ENCODE measurements at regions of chr2 and their contacts with region 1.

Region 1: DNA sequence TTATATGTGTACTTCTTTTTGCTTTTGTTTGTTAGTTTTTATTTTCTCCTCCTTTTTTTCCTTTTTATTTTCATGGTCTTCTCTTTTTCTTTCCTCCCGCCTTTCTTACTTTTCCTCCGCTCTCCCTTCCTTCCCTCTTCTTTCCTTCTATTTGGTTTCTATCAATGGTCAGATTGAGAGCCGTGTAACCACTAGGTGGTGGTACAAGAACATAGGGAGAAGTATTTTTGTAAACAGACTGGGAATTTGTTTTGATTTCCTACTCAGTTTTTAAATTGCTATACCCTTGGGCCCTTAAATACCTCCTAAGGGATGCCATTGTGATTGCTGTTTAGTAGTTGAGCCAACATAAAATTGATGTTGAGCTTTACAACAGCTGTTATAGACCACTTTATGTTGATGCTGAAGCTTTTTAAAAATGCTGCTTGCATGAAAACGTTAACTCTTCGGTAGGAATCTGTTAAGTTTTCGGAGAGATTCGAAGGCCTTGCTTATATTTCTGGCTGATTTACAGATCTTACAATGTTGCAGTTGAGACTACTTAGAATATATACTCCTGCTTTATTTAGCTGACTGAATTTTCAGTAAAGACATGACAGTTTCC is 124.2 kb downstream of the UBE2E3 start:
- DNase-seq: peak in 7 of 9 donors; percentile 14 to 66 (median 54)
- ATAC-seq: peak; percentile 64
- H3K4me3 ChIP-seq: no peak overlapping the region
- H3K4me3 Mint-ChIP-seq: peak overlapping the region in 7 of 10 donors; percentile 0 to 27 (median 11)
- H3K27ac ChIP-seq: no peak overlapping the region
- H3K27ac Mint-ChIP-seq: peak overlapping the region in 7 of 9 donors; percentile 4 to 35 (median 27)
- H3K4me1 ChIP-seq: peaks cover 30 to 34% of the 10 kb centered on the region in 2 donors
- H3K4me1 Mint-ChIP-seq: peaks cover 11 to 48% (median 37%) of the 10 kb centered on the region in 7 donors
- H3K27me3 ChIP-seq: no peaks in the 10 kb centered on the region
- H3K27me3 Mint-ChIP-seq: peaks cover 0 to 4% (median 3%) of the 10 kb centered on the region in 5 donors

Region 2: DNA sequence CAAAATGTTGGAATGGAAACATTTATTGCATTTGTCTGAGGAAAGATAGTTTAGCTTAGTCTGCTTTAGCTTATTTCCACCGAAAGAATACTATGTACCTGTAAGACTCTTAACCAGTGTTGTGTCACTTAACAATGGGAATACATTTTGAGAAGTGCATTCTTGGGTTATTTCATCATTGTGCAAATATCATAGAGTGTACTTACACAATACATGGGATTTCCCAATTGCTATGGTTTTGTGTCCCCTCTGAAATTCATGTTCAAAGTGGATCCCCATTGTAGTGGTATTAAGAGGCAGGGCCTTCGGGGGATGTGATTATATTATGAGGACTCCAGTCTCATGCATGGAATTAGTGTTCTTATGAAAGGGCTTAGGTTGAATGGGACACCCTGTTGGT is 373.6 kb before region 1 on chr2:
- CTCF ChIA-PET with region 1: no interaction called
- POLR2A ChIA-PET with region 1: no interaction called
- intact Hi-C with region 1: no loop called
- DNase-seq: no peak
- ATAC-seq: no peak
- H3K4me3 ChIP-seq: no peak overlapping the region
- H3K4me3 Mint-ChIP-seq: no peak overlapping the region
- H3K27ac ChIP-seq: no peak overlapping the region
- H3K27ac Mint-ChIP-seq: no peak overlapping the region
- H3K4me1 ChIP-seq: no peaks in the 10 kb centered on the region
- H3K4me1 Mint-ChIP-seq: no peaks in the 10 kb centered on the region
- H3K27me3 ChIP-seq: no peaks in the 10 kb centered on the region
- H3K27me3 Mint-ChIP-seq: peaks cover 0 to 10% (median 6%) of the 10 kb centered on the region in 5 donors

Region 3: GRCh38 chr2:181077128-181077709 is 27.4 kb before region 1 on chr2:
- CTCF ChIA-PET with region 1: no interaction called
- POLR2A ChIA-PET with region 1: no interaction called
- intact Hi-C with region 1: loop called in 1 of 2 experiments (anchors 2 kb)
- DNase-seq: peak in 7 of 9 donors; percentile 49 to 76 (median 64)
- ATAC-seq: peak; percentile 90
- H3K4me3 ChIP-seq: no peak overlapping the region
- H3K4me3 Mint-ChIP-seq: no peak overlapping the region
- H3K27ac ChIP-seq: no peak overlapping the region
- H3K27ac Mint-ChIP-seq: no peak overlapping the region
- H3K4me1 ChIP-seq: no peaks in the 10 kb centered on the region
- H3K4me1 Mint-ChIP-seq: peaks cover 0 to 11% (median 0%) of the 10 kb centered on the region in 7 donors
- H3K27me3 ChIP-seq: no peaks in the 10 kb centered on the region
- H3K27me3 Mint-ChIP-seq: peaks cover 0 to 14% (median 0%) of the 10 kb centered on the region in 5 donors

Region 4: GRCh38 chr2:181165199-181165868 is 60.7 kb after region 1 on chr2:
- CTCF ChIA-PET with region 1: interaction called, 6 read pairs
- POLR2A ChIA-PET with region 1: no interaction called
- intact Hi-C with region 1: loop called in 1 of 2 experiments (anchors 2 kb)
- DNase-seq: peak in 5 of 9 donors; percentile 28 to 54 (median 32)
- ATAC-seq: peak; percentile 77
- H3K4me3 ChIP-seq: peak overlapping the region; percentile 40
- H3K4me3 Mint-ChIP-seq: peak overlapping the region; percentile 73 to 87 (median 77)
- H3K27ac ChIP-seq: peak overlapping the region; percentile 58
- H3K27ac Mint-ChIP-seq: peak overlapping the region; percentile 89 to 98 (median 95)
- H3K4me1 ChIP-seq: peaks cover 31 to 45% of the 10 kb centered on the region in 2 donors
- H3K4me1 Mint-ChIP-seq: peaks cover 22 to 64% (median 51%) of the 10 kb centered on the region in 7 donors
- H3K27me3 ChIP-seq: no peaks in the 10 kb centered on the region
- H3K27me3 Mint-ChIP-seq: no peaks in the 10 kb centered on the region

Region 5: GRCh38 chr2:181196401-181196800 is 91.8 kb after region 1 on chr2:
- CTCF ChIA-PET with region 1: no interaction called
- POLR2A ChIA-PET with region 1: no interaction called
- intact Hi-C with region 1: no loop called
- DNase-seq: no peak
- ATAC-seq: no peak
- H3K4me3 ChIP-seq: peak overlapping the region; percentile 1
- H3K4me3 Mint-ChIP-seq: peak overlapping the region in 8 of 10 donors; percentile 14 to 53 (median 42)
- H3K27ac ChIP-seq: no peak overlapping the region
- H3K27ac Mint-ChIP-seq: peak overlapping the region; percentile 17 to 94 (median 62)
- H3K4me1 ChIP-seq: peaks cover 34 to 38% of the 10 kb centered on the region in 2 donors
- H3K4me1 Mint-ChIP-seq: peaks cover 28 to 79% (median 58%) of the 10 kb centered on the region in 7 donors
- H3K27me3 ChIP-seq: no peaks in the 10 kb centered on the region
- H3K27me3 Mint-ChIP-seq: no peaks in the 10 kb centered on the region

Region 6: DNA sequence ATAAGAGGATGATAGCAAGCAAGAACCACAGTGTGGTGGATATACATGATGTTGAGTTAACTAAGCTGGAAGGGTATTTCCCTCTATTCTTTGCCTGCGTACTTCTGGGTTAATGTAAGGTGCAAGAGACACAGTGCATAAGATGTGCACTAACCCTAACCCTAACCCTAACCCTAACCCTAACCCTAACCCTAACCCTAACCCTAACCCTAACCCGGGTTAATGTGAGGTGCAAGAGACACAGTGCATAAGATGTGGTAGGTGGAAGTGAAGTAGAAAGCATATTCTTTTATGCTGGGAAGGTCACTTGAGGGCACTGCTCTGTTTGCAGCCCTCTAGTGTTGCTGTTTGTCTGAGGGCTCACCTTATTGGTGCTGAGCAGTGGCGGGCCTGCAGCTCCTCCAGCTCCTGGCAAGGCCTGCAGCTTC is 171.0 kb after region 1 on chr2:
- CTCF ChIA-PET with region 1: interaction called, 11 read pairs
- POLR2A ChIA-PET with region 1: interaction called, 3 read pairs
- intact Hi-C with region 1: loop called (anchors 1 to 2 kb)
- DNase-seq: peak in 7 of 9 donors; percentile 24 to 38 (median 31)
- ATAC-seq: peak; percentile 93
- H3K4me3 ChIP-seq: no peak overlapping the region
- H3K4me3 Mint-ChIP-seq: peak overlapping the region in 5 of 10 donors; percentile 25 to 62 (median 35)
- H3K27ac ChIP-seq: peak overlapping the region; percentile 38
- H3K27ac Mint-ChIP-seq: peak overlapping the region; percentile 57 to 93 (median 83)
- H3K4me1 ChIP-seq: peaks cover 18 to 30% of the 10 kb centered on the region in 2 donors
- H3K4me1 Mint-ChIP-seq: peaks cover 18 to 56% (median 41%) of the 10 kb centered on the region in 7 donors
- H3K27me3 ChIP-seq: no peaks in the 10 kb centered on the region
- H3K27me3 Mint-ChIP-seq: no peaks in the 10 kb centered on the region

Region 7: DNA sequence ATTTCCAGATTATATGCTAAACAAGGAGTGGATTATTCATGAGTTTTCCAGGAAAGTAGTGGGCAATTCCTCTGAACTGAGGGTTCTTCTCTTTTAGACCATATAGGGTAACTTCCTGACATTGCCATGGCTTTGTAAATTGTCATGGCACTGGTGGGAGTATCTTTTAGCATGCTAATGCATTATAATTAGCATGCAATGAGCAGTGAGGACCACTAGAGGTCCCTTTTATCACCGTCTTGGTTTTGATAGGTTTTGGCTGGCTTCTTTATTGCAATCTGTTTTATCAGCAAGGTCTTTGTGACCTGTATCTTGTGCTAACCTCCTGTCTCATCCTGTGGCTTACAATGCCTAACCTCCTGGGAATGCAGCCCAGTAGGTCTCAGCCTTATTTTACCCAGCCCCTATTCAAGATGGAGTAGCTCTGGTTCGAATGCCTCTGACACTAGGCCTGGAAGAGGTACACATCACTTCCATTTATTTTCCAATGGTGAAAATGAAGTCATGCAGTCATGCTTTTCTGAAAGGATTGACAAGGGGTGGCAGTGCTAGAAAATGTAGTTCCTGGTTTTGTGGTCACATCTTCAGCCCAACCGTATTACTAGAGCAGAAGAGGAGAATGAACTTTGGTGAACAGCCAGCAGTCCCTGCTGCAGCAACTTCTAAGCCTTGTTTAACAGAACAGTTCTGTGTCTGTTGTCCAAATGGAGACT is 325.9 kb after region 1 on chr2:
- CTCF ChIA-PET with region 1: no interaction called
- POLR2A ChIA-PET with region 1: no interaction called
- intact Hi-C with region 1: loop called in 1 of 2 experiments (anchors 2 kb)
- DNase-seq: peak in 6 of 9 donors; percentile 11 to 45 (median 29)
- ATAC-seq: peak; percentile 70
- H3K4me3 ChIP-seq: no peak overlapping the region
- H3K4me3 Mint-ChIP-seq: peak overlapping the region in 1 of 10 donors; percentile 15
- H3K27ac ChIP-seq: no peak overlapping the region
- H3K27ac Mint-ChIP-seq: peak overlapping the region in 6 of 9 donors; percentile 18 to 73 (median 50)
- H3K4me1 ChIP-seq: peaks cover 0 to 12% of the 10 kb centered on the region in 2 donors
- H3K4me1 Mint-ChIP-seq: peaks cover 5 to 20% (median 8%) of the 10 kb centered on the region in 7 donors
- H3K27me3 ChIP-seq: no peaks in the 10 kb centered on the region
- H3K27me3 Mint-ChIP-seq: no peaks in the 10 kb centered on the region

Region 8: DNA sequence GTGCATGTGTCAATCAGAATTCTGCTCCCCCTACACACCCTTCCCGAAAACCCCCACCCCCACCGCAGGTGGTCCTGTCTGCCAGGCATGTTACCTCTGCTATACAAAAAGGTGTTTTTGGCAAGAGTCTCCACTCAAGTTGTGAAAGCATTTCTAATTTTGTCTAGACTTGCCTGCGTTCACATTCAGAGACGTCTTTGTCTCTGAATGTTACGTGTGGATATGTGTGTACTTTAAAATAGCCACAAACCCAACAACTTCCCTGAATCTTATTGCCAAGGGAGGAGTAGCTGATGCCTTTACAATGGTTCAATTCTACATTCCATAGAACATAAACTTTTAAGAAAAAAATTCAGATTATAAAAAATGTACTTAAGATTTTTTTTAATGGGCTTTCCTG is 419.1 kb after region 1 on chr2:
- CTCF ChIA-PET with region 1: no interaction called
- POLR2A ChIA-PET with region 1: no interaction called
- intact Hi-C with region 1: loop called in 1 of 2 experiments (anchors 5 kb)
- DNase-seq: no peak
- ATAC-seq: no peak
- H3K4me3 ChIP-seq: no peak overlapping the region
- H3K4me3 Mint-ChIP-seq: no peak overlapping the region
- H3K27ac ChIP-seq: no peak overlapping the region
- H3K27ac Mint-ChIP-seq: peak overlapping the region in 1 of 9 donors; percentile 46
- H3K4me1 ChIP-seq: no peaks in the 10 kb centered on the region
- H3K4me1 Mint-ChIP-seq: peaks cover 0 to 6% (median 0%) of the 10 kb centered on the region in 7 donors
- H3K27me3 ChIP-seq: no peaks in the 10 kb centered on the region
- H3K27me3 Mint-ChIP-seq: no peaks in the 10 kb centered on the region

Region 9: GRCh38 chr2:181607629-181608590 is 503.3 kb after region 1 on chr2:
- CTCF ChIA-PET with region 1: no interaction called
- POLR2A ChIA-PET with region 1: no interaction called
- intact Hi-C with region 1: no loop called
- DNase-seq: peak in 4 of 9 donors; percentile 7 to 21 (median 14)
- ATAC-seq: no peak
- H3K4me3 ChIP-seq: no peak overlapping the region
- H3K4me3 Mint-ChIP-seq: peak overlapping the region in 7 of 10 donors; percentile 20 to 66 (median 55)
- H3K27ac ChIP-seq: no peak overlapping the region
- H3K27ac Mint-ChIP-seq: peak overlapping the region; percentile 26 to 91 (median 74)
- H3K4me1 ChIP-seq: peaks cover 0 to 18% of the 10 kb centered on the region in 2 donors
- H3K4me1 Mint-ChIP-seq: peaks cover 20 to 39% (median 29%) of the 10 kb centered on the region in 7 donors
- H3K27me3 ChIP-seq: no peaks in the 10 kb centered on the region
- H3K27me3 Mint-ChIP-seq: peaks cover 0 to 2% (median 0%) of the 10 kb centered on the region in 5 donors

Measured in naive thymus-derived CD4-positive, alpha-beta T cell (primary cell).